GM13976 (cell line): ENCODE measurements at regions of chr10 and their contacts with region 1.

Region 1: DNA sequence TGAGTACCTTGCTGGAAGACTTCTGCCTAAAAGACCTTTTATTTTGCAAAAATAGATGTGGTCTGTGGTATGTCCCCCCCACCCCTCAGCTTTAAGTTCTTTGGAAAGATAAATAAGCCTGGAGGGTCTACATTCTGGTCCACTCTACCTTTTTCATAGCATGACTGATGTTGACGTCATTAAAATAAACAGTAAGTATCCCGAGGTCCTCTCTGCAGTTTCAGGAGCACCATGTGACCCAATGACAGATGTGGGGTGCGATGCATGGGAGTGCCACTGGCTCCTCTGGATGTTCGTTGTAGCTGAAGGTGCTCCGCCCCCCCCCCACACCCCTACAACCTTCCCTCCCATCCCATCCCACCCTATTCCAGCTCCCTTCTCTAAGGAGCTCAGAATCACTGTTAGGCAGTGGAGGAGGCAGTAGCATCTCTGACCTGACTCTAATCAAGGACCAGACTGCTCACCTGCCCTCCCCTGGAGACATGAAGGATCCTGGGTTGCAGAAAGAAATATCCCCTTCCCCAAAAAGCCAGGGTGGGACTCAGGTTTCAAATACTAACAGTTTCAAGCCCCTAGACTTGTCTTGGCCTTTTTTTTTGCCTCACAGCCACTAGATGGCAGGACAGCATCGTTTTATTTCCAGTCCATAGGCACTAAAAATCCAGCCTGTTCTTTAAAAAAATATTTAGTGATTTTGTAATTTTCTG is 25.1 kb downstream of the CASP7 start:
- DNase-seq: peak; percentile 46
- CTCF ChIP-seq: peak; percentile 58

Region 2: DNA sequence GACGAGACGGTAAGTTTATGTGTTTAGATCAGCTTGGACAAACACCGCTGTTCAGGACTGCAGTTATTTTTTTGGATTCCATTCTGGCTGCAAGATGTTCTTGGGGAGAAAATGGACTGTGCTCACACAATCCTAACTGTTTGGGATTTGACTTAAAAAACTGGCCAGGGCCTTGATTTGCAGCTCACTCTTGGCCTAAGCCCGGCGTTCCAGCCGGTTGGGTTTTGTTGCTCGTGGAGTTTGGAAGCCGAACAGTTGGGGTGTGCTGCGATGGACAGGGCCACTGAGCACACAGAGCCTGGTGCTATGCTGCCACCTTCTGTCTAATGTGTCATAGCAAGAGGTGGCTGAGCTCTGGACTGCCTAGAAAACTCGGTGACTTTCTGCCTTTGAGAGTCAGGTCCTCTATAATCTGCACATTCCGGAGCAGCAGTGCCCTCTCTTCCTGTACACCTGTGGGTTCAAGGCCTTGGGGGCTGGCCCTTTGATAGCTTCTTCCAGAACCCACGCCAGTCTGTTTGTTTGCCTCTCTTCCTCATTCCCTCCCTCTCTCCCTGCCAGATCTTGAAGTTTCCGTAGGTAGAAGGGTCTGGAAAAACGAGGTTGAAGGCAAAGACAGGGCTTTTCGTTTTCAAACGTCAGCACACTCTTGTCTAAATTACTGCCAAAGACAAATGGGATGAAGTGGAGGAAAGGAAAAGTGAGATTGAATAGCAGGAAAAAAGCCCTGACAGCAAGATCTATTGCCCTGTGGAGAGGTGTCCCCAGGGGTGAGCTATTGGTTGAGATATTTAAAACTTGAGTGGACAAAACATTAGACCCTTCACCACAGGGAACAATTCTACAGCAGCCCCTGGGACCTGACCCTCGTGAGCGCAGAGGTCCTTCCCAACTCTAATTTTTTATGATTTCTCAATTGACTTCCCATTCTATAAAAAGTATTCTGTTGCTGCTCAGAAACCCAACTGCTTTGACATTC is 319.5 kb before region 1 on chr10:
- in situ Hi-C with region 1: no loop called
- DNase-seq: peak; percentile 53
- CTCF ChIP-seq: peak; percentile 57

Region 3: GRCh38 chr10:113788604-113789083 is 83.9 kb after region 1 on chr10:
- in situ Hi-C with region 1: loop called (anchors 10 kb)
- DNase-seq: peak; percentile 31
- CTCF ChIP-seq: no peak

Region 4: GRCh38 chr10:114110174-114110972 is 405.6 kb after region 1 on chr10:
- in situ Hi-C with region 1: loop called (anchors 10 kb)
- DNase-seq: no peak
- CTCF ChIP-seq: no peak